HepG2 (cell line): ENCODE measurements at regions of chr14 and their contacts with region 1.

Region 1: DNA sequence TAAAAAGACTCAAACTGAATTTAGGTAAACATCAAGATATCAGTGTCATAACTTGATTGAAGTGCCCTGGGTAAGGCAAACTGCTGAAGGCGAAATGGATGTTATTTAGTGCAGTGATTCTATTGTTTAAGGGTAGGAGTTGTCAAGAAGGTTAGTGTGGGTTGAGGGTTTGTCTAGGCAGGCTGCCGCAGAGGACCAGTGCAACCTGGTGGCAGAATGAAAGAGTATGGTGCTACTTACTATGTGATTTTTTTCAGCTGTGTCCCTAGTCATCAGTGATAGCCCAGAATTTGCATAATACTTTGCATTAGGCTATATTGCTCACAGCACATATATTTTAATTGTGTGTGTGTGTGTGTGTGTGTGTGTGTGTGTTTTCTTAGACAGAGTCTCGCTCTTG is 1127.0 kb downstream of the GALC start:
- DNase-seq: no peak
- ATAC-seq: peak; percentile 71
- H3K4me3 ChIP-seq: no peak overlapping the region
- H3K27ac ChIP-seq: no peak overlapping the region
- H3K4me1 ChIP-seq: no peaks in the 10 kb centered on the region
- H3K27me3 ChIP-seq: no peaks in the 10 kb centered on the region
- CTCF ChIP-seq: peak; percentile 48
- EP300 ChIP-seq: no peak
- POLR2A ChIP-seq: no peak
- RAD21 ChIP-seq: 0 out of 2 replicates have a peak, but pooled peaks have one; percentile 11

Region 2: DNA sequence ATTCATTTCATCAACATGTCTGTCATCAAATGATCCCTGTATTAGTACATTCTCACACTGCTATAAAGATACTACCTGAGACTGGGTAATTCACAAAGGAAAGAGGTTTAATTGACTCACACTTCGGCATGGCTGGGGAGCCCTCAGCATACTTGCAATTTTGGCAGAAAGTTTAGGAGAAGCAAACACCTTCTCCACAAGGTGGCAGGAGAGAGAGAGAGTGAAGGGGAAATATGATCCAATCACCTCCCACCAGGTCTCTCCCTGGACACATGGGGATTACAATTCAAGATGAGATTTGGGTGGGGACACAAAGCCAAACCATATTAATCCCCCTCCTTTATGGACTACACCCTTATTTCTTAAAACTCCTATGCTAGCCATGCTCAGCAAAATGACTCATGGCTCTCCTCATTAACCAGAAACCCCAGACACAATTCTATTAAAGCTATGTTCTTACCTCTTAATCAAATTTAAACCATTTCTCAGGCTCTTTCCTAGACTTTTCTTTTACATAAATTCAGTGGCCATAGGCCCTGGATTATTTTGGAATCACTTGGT is 403.7 kb before region 1 on chr14:
- CTCF ChIA-PET with region 1: no interaction called
- POLR2A ChIA-PET with region 1: no interaction called
- in situ Hi-C with region 1: no loop called
- intact Hi-C with region 1: loop called (anchors 1 kb)
- DNase-seq: peak; percentile 40
- ATAC-seq: peak; percentile 80
- H3K4me3 ChIP-seq: no peak overlapping the region
- H3K27ac ChIP-seq: no peak overlapping the region
- H3K4me1 ChIP-seq: no peaks in the 10 kb centered on the region
- H3K27me3 ChIP-seq: peaks cover 0 to 3% of the 10 kb centered on the region in 2 experiments; a peak in 1 of 5 replicates
- CTCF ChIP-seq: peak; percentile 65
- EP300 ChIP-seq: no peak
- POLR2A ChIP-seq: no peak
- RAD21 ChIP-seq: peak; percentile 40; the same call in 1 of the 2 replicates

Region 3: DNA sequence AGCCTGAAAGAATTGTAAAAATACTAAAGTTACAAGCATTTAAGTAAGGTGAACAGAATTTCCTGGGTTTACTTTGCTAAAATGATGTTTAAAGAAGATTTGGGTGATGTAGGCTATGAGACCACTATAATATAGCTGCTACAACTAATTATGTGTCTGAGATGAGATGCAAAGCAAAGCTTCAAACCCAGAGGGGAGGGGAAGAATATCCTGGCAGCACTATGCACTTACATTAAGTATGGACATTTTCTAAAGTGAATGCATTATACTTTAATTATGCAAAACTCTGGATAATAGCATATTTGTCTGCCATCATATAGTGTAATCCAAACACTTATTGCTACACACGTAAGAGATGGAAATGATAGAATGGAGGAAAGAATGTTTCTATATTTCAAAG is 123.4 kb after region 1 on chr14:
- CTCF ChIA-PET with region 1: no interaction called
- POLR2A ChIA-PET with region 1: no interaction called
- in situ Hi-C with region 1: no loop called
- intact Hi-C with region 1: no loop called
- DNase-seq: no peak
- ATAC-seq: no peak
- H3K4me3 ChIP-seq: no peak overlapping the region
- H3K27ac ChIP-seq: no peak overlapping the region
- H3K4me1 ChIP-seq: no peaks in the 10 kb centered on the region
- H3K27me3 ChIP-seq: no peaks in the 10 kb centered on the region
- CTCF ChIP-seq: no peak
- EP300 ChIP-seq: no peak
- POLR2A ChIP-seq: no peak
- RAD21 ChIP-seq: no peak

Region 4: DNA sequence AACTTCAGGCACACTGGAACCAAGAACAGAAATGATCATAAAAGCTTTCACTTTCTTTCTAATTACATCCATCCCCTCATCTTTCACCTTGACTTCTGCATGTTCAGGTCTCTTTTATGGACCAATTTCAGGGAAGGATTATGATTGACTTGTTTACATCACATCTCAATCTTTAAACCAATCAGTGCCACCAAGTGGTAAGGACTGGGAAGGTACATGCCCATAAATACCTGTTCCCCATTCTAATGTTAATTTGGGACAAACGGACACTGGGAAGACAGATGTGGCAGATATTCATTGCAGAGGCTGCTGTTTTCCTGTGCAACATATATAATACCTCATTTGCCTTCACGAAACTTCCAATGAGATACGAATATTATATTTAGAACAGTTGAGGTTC is 148.9 kb after region 1 on chr14:
- CTCF ChIA-PET with region 1: no interaction called
- POLR2A ChIA-PET with region 1: no interaction called
- in situ Hi-C with region 1: no loop called
- intact Hi-C with region 1: no loop called
- DNase-seq: no peak
- ATAC-seq: 0 out of 3 replicates have a peak, but pooled peaks have one; percentile 33
- H3K4me3 ChIP-seq: no peak overlapping the region
- H3K27ac ChIP-seq: no peak overlapping the region
- H3K4me1 ChIP-seq: no peaks in the 10 kb centered on the region
- H3K27me3 ChIP-seq: no peaks in the 10 kb centered on the region
- CTCF ChIP-seq: peak; percentile 36; the same call in 1 of the 2 replicates
- EP300 ChIP-seq: no peak
- POLR2A ChIP-seq: no peak
- RAD21 ChIP-seq: no peak

Region 5: GRCh38 chr14:88824314-88825077 is 1958.6 kb after region 1 on chr14 and contains the start of gene TTC8:
- CTCF ChIA-PET with region 1: no interaction called
- POLR2A ChIA-PET with region 1: no interaction called
- in situ Hi-C with region 1: no loop called
- intact Hi-C with region 1: loop called (anchors 10 kb)
- DNase-seq: peak; percentile 80
- ATAC-seq: peak; percentile 99
- H3K4me3 ChIP-seq: peak within 1 kb of the TSS; percentile 78 to 89 (median 88)
- H3K27ac ChIP-seq: peak within 1 kb of the TSS; percentile 82
- H3K4me1 ChIP-seq: peaks cover 37% of the 10 kb centered on the region
- H3K27me3 ChIP-seq: no peaks in the 10 kb centered on the region
- CTCF ChIP-seq: peak; percentile 12; the same call in 1 of the 2 replicates
- EP300 ChIP-seq: no peak; a peak in 1 of 4 replicates
- POLR2A ChIP-seq: peak; percentile 91 to 93
- RAD21 ChIP-seq: no peak
- total RNA-seq, gene TTC8: 13.8 and 19.5 TPM in 2 replicates